ENCODE measurements at regions of chr9 and their contacts with region 1.

Region 1: GRCh38 chr9:83544002-83544698 is 5.9 kb upstream of the FRMD3 start:
- DNase-seq: peak; percentile 48
- H3K4me3 ChIP-seq: no peak overlapping the region
- H3K27ac ChIP-seq: no peak overlapping the region
- H3K4me1 ChIP-seq: no peaks in the 10 kb centered on the region
- H3K27me3 ChIP-seq: no peaks in the 10 kb centered on the region
- CTCF ChIP-seq: peak; percentile 62

Region 2: DNA sequence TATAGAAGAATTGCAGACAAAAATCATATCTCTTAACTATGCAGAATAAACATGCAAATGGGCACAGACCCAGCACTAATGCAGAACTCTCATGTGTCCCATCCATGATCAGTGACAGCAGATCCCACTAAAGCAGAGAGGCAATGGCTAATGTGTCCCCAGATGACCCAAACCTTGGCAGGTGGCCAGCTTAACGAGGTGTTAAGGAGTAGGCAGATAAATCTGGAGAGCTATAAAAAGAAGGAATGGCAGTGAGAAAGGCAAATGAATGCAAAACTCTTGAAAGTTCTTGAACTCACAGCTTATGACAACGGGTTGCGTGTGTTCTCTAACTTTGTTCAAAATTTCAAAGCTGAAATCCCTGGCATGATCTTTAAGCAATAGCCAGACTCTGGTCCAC is 746.6 kb before region 1 on chr9:
- intact Hi-C with region 1: no loop called
- DNase-seq: peak; percentile 44
- H3K4me3 ChIP-seq: no peak overlapping the region
- H3K27ac ChIP-seq: no peak overlapping the region
- H3K4me1 ChIP-seq: no peaks in the 10 kb centered on the region
- H3K27me3 ChIP-seq: no peaks in the 10 kb centered on the region
- CTCF ChIP-seq: no peak

Region 3: GRCh38 chr9:83199243-83199642 is 344.9 kb before region 1 on chr9:
- intact Hi-C with region 1: loop called (anchors 10 kb)
- DNase-seq: peak; percentile 29
- H3K4me3 ChIP-seq: no peak overlapping the region
- H3K27ac ChIP-seq: no peak overlapping the region
- H3K4me1 ChIP-seq: no peaks in the 10 kb centered on the region
- H3K27me3 ChIP-seq: no peaks in the 10 kb centered on the region
- CTCF ChIP-seq: peak; percentile 40

Region 4: DNA sequence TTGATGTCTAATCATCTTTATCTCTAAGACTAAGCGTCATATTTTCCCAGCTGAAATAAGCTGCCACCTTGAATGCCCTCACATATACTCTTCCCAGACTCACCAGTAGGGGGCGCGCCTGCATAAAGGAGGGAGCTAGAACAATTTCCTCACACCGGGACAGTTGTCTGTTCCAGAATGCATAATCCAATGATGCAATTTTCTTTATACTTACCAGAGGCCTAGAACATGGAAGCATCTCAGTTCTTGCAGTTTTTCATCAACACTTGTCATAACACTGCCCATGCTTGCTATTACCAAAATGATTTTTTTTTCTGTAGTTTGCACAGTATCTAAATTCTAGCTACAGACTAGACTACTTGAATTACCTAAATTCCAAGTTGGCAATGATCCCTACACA is 209.8 kb before region 1 on chr9:
- intact Hi-C with region 1: loop called (anchors 2 kb)
- DNase-seq: peak; percentile 89
- H3K4me3 ChIP-seq: no peak overlapping the region
- H3K27ac ChIP-seq: no peak overlapping the region
- H3K4me1 ChIP-seq: no peaks in the 10 kb centered on the region
- H3K27me3 ChIP-seq: no peaks in the 10 kb centered on the region
- CTCF ChIP-seq: peak; percentile 88